ENCODE measurements at regions of chr10 and their contacts with region 1.

Region 1: GRCh38 chr10:93871671-93872204 is 22.0 kb upstream of the SLC35G1 start:
- DNase-seq: no peak
- ATAC-seq: no peak
- H3K4me3 Mint-ChIP-seq: no peak overlapping the region
- H3K27ac Mint-ChIP-seq: no peak overlapping the region
- H3K4me1 Mint-ChIP-seq: no peaks in the 10 kb centered on the region
- H3K27me3 Mint-ChIP-seq: peaks cover 15% of the 10 kb centered on the region
- CTCF ChIP-seq: no peak

Region 2: GRCh38 chr10:93859049-93859655 is 12.6 kb before region 1 on chr10:
- CTCF ChIA-PET with region 1: interaction called, 11 read pairs
- POLR2A ChIA-PET with region 1: no interaction called
- intact Hi-C with region 1: no loop called
- DNase-seq: no peak
- ATAC-seq: no peak
- H3K4me3 Mint-ChIP-seq: no peak overlapping the region
- H3K27ac Mint-ChIP-seq: no peak overlapping the region
- H3K4me1 Mint-ChIP-seq: no peaks in the 10 kb centered on the region
- H3K27me3 Mint-ChIP-seq: peaks cover 3% of the 10 kb centered on the region
- CTCF ChIP-seq: peak; percentile 51

Region 3: DNA sequence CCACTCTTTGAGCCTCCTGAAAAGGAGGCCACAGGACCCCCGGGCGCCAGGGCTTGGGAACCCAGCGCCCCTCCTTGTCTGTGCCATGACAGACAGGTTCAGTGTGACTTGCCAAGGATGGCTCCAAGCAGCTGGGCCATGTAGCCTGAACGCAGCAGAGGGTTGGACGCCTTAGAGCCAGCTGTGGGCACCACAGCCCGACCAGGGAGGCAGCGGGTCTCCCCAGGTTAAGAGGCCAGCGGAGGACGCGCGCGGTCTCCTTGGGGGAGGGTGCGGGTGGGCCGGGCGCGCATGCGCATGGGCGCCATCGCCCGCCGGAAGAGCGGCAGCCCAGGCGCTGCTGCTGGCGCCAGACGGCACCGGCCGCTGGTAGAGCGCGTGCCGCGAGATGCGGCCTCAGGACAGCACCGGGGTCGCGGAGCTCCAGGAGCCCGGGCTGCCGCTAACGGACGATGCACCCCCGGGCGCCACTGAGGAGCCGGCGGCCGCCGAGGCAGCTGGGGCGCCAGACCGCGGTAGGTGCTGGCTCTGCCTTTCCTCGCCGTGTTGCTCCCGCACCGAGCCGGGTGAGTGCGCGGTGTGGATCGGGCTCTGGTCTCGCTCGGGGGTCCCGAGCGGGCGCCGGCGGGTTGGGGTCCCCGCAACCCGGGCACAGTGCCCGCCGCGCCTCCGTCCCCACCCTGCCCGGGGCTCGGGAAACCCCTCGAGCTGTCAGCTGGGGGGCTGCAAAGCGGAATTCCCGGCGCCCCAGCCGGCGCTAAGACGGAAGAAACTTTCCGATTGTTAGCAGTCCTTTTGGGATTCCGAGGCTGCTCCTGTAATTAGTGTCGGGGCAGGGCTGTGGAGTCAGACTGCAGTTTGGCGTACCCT is 22.1 kb after region 1 on chr10 and contains the start of gene SLC35G1:
- CTCF ChIA-PET with region 1: no interaction called
- POLR2A ChIA-PET with region 1: no interaction called
- intact Hi-C with region 1: no loop called
- DNase-seq: peak; percentile 64
- ATAC-seq: peak; percentile 96
- H3K4me3 Mint-ChIP-seq: peak within 1 kb of the TSS; percentile 74
- H3K27ac Mint-ChIP-seq: peak within 1 kb of the TSS; percentile 63
- H3K4me1 Mint-ChIP-seq: peaks cover 25% of the 10 kb centered on the region
- H3K27me3 Mint-ChIP-seq: peaks cover 4% of the 10 kb centered on the region
- CTCF ChIP-seq: no peak
- total RNA-seq, gene SLC35G1: 2.0 to 3.2 TPM

Region 4: DNA sequence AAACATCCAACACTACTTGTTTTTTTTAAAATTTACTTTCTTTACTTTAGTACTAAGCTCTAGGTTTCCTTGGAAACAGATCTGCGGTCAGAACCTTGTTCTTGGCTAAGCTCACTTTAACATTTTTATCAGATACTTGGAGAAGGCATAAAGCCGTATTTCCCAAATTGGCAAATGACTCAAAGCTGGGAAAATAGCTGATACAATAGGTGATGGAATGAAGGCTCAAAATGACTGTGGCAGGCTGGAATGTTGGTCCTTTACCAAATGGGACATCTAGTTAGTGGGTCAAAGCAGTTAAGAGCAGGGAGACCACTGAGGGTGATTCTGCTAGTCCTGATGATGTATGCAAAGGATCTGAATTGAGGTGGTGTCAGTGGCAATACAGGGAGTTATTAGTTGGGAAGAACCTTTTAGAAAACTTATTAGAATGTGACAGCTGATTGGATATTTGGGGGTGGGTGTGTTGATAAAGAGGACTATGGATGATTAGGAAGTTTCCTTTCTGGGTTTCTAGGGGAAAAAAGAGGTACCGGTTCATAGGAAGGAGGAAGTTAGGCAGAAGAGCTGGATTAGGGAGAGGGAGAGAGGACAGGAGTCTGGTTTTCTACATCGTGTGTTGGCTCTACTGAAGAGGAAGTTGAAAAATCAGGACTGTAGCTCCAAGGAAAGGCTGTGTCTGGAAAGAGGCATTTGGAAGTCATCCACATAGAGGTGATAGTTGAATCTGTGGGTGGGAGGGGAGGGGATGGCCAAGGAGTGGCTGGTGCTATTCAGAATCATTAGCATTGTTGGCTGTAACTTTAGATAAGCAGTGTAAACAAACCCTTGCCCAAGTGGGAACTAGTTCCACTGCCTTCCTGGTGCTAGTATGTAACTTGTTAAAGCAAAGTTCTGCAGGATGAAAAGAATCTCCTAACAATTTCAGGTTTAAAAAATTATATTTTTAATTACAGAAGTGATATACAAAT is 135.1 kb after region 1 on chr10:
- CTCF ChIA-PET with region 1: no interaction called
- POLR2A ChIA-PET with region 1: no interaction called
- intact Hi-C with region 1: no loop called
- DNase-seq: no peak
- ATAC-seq: no peak
- H3K4me3 Mint-ChIP-seq: no peak overlapping the region
- H3K27ac Mint-ChIP-seq: no peak overlapping the region
- H3K4me1 Mint-ChIP-seq: no peaks in the 10 kb centered on the region
- H3K27me3 Mint-ChIP-seq: peaks cover 7% of the 10 kb centered on the region
- CTCF ChIP-seq: no peak

Measured in activated CD8-positive, alpha-beta T cell treated with anti-CD3 and anti-CD28 coated beads for 36 hours (primary cell).